Head of caudate nucleus (tissue), 42 donors: ENCODE measurements at regions of chr3 and their contacts with region 1.

Region 1: DNA sequence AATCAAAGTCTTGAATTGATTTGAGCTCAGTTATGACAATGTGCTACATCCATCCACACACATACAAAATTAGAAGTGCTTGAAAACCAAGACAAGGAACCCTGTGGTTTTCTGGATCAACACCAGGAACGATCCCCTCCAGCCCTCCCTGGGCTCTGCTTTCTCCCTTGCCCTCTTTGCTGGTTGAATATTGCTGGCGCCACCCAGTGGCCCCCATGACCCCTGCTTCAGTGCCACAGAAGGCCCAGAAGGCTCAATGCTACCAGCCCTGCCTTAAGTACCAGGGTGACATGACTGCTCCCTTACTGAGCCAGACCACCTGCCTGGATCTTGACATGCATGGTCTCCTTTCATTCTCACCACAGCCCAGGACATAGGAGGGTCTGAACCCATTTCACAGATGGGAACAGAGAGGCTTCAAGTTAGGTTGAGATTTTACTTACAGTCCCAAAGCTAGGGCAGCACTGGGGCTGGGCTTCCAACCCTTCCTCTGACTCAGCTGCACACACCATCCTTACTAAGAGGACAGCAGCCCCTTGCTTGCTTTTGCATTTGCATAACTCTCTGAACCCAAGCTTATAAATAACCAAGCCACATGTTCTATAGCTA is 15.0 kb downstream of the IL12A start:
- DNase-seq: peak; percentile 19 to 91 (median 78)

Region 2: GRCh38 chr3:159260049-159260662 is 743.5 kb before region 1 on chr3:
- intact Hi-C with region 1: loop called (anchors 10 kb)
- DNase-seq: peak in 35 of 42 donors; percentile 15 to 84 (median 56)

Region 3: GRCh38 chr3:159828542-159828943 is 175.1 kb before region 1 on chr3:
- intact Hi-C with region 1: loop called (anchors 5 kb)
- DNase-seq: peak in 1 of 42 donors; percentile 48

Region 4: DNA sequence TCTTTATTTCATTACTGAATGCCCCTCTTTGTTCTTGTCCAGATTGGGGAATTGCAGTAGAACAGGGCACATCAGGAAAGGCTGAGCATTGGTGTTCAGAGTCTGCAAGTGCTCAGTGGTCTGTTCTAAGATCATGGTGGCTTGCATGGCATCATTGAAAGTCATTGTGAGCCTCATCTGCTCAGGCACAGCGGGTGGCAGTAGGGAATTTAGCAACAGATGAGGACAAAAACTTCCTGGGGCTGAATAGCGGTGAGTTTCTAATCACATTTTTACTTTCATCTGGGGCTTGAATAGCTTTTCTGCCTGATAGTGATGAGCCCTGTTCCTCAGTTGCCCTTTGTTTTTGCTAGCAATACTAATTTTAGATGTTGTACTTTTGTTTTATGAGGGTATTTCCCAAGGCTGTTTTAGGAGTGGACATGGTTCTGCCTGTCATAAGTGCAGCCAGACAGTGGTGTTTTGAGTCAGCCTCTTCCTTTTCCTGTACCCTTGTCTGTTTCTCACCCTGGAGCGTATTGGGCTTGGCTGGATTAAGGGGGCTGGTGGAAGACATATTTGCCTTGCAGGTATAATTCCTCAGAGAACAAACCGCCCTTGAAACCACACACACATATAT is 142.1 kb before region 1 on chr3:
- intact Hi-C with region 1: no loop called
- DNase-seq: peak in 1 of 42 donors; percentile 15

Region 5: DNA sequence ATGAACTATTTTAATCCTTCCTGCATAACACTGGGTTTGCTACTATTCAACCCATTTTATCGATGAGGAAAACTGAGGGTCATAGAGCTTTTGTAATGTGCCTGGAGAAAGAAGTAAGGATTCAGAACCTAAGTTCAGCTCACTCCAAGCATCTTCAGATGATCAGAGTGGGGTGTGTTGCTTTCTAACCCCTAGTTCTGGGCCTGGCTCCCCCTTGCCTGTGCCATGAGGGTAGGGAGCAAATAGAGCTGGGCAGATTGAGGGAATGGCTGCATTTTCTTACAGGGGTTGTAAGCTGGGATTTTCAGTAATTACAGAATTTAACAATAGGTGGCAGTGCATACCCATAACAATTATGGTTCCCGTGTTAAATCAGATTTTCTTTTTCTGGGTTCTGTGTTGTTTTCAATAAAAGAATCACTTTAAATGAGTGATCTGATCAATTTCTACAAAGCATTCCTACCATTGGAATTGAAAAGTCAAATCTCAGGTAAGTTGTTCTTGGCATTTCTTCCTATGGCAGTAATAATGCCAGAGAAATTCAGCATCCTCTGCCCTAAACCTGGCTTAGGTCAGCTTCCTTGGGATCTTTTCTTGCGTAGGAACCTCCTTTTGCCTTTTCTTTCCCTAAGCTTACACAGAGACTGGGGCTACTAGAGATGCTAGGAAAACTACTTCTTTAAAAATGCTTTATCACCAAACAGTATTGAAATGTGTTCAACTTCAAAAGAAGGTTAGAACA is 118.8 kb before region 1 on chr3:
- intact Hi-C with region 1: loop called (anchors 5 kb)
- DNase-seq: peak in 1 of 42 donors; percentile 44